ENCODE measurements at regions of chr22 and their contacts with region 1.

Region 1: DNA sequence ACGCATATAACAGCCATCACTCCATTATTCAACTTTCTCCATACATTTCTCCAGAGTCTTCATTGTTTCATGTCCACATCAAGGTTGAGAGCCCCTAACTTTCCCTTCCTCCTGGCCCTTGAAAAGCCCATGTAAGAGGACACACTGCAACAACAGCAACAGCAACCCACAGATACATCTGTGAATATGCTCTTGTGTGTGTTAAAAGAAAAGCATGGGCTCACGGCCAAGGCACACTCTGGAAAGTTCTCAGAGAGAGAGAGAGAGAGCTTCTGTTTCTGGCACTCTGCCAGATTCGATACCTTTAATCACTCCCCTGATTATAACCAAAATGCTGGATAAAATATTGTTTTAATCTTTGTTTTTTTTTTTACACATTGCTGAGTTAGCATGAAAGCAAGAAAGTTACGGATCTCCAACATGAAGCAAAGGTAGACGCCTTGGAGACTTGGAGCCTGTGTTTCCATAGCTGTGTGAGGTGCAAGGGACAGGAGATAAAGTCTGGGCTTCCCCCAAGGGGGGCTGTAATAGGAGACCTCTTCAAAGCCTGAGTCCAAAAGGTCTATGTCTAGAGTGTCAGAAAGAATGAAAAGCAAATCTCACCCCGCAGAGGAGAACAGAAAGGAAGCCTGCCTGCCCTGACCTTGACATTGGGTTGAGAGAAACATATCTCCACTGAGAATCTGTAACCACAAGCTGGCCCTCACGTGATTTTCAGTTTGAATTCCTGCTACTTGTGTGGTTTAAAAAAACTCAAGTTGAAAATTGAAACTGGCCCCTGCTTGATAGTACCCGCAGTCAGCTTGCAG is 33.7 kb upstream of the MPPED1 start:
- DNase-seq: no peak
- CTCF ChIP-seq: no peak

Region 2: GRCh38 chr22:43126480-43127165 is 251.5 kb before region 1 on chr22:
- in situ Hi-C with region 1: no loop called
- DNase-seq: no peak
- CTCF ChIP-seq: no peak

Region 3: GRCh38 chr22:43273902-43274484 is 104.1 kb before region 1 on chr22:
- in situ Hi-C with region 1: loop called (anchors 10 kb)
- DNase-seq: peak; percentile 85
- CTCF ChIP-seq: peak; percentile 84

Measured in GM13977 (cell line).